CD4-positive, alpha-beta memory T cell (primary cell): ENCODE measurements at regions of chr4 and their contacts with region 1.

Region 1: DNA sequence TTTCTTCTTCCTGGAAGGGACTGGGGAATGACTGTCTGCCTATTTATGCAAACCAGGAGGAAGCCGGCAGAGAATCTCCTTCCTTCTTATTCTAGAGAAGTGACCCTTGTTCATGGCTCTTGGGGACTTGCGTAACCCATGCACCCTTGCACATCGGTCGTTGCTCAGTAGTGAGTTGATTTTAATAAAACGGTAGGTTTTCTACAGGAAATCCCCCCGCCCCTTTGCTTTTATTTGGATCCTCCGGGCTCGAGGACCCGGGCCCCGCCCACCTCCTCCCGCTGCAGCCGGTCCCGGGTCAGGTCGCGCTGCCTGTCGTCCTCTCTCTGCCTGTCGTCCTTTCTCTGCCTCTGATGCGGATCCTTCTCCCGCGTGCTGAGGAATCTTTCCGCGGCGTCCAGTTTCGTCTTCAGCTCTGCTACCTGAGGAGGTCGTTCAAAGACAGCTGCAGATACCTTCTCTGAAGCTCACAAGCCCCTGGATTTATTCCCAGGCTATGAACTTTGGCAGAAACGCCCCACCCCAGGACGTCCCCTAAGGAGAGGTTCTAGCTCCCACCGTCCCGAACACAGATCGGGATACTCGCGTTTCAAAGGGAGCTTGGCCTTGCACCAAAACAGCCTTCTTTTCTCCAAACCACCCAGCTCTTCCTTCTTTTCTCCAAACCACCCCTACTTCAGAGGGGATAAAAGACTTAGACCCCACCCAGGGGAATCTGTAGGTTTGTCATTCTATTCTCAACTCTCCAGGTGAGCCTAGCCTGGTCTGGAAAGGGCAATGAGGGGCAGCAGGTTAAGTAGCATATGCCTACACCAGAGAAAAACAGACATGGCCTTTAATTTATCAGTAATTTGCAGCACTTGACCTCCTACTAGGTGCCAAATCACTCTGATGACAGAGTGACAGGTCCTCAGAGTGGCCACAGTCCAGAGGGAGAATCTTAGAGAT is 7.0 kb downstream of the TNIP3 start:
- DNase-seq: peak in 3 of 5 donors; percentile 16 to 25 (median 19)
- H3K4me3 ChIP-seq: peak overlapping the region; percentile 33 to 51
- H3K4me3 Mint-ChIP-seq: peak overlapping the region; percentile 88 to 97 (median 94)
- H3K27ac ChIP-seq: peak overlapping the region; percentile 1
- H3K27ac Mint-ChIP-seq: peak overlapping the region; percentile 30 to 94 (median 90)
- H3K4me1 ChIP-seq: peaks cover 55% of the 10 kb centered on the region
- H3K4me1 Mint-ChIP-seq: peaks cover 34 to 54% (median 47%) of the 10 kb centered on the region in 4 donors
- H3K27me3 ChIP-seq: no peaks in the 10 kb centered on the region
- H3K27me3 Mint-ChIP-seq: no peaks in the 10 kb centered on the region

Region 2: DNA sequence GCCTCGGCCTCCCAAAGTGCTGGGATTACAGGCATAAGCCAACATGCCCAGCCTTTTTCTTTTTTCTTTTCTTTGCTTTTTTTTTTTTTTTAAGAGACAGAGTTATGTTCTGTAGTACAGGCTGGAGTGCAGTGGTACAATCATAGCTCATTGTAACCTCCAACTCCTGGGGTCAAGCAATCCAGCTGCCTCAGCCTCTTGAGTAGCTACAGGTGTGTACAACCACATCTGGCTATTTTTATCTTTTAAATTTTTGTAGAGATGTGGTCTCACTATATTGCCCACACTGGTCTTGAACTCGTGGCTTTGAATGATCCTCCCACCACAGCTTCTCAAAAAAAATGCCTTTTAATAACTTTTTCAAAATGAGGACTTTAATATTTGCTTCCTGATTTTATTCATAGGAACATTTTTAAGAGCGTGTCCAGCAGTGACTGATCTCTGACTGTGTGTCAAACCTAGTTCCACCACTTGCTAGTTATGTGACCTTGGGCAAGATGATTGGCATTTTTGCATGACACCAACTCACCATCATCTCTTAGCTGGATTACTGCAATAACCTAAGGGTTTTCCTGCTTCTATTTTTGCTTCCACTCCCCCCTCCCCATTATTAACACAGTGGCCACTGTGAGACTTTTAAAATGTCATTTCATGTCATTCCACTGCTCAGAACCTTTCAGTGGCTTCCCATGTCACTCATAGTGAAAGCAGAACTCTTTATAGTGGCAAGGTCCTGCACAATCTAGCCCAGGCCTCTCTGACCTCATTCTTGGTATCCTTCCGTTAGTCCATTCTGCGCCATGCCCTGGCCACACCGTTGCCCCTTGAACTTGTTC is 11.6 kb after region 1 on chr4:
- CTCF ChIA-PET with region 1: interaction called, 6 read pairs
- POLR2A ChIA-PET with region 1: interaction called, 8 read pairs
- intact Hi-C with region 1: loop called (anchors 1 kb)
- DNase-seq: no peak
- H3K4me3 ChIP-seq: no peak overlapping the region
- H3K4me3 Mint-ChIP-seq: no peak overlapping the region
- H3K27ac ChIP-seq: no peak overlapping the region
- H3K27ac Mint-ChIP-seq: peak overlapping the region in 1 of 7 donors; percentile 19
- H3K4me1 ChIP-seq: peaks cover 28% of the 10 kb centered on the region
- H3K4me1 Mint-ChIP-seq: peaks cover 32 to 48% (median 39%) of the 10 kb centered on the region in 4 donors
- H3K27me3 ChIP-seq: no peaks in the 10 kb centered on the region
- H3K27me3 Mint-ChIP-seq: no peaks in the 10 kb centered on the region

Region 3: DNA sequence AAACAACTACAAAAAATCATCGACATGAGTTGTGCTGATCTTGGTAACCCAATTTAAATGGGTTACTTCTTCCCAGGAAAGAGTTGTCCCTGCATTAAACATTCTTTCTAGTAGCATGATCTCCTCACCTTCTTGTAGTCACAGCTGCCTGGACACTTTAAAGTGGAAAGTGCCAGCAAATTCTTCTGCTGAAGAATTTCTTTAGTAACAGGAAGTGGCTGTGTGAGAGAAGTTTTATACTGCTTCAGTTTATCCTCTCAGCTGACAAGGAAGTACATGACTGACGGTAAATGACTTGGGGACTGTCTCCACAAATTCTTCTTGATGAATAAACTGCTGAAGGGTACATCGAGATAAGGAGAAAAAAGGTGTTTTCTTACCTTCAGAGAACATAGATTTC is 25.2 kb after region 1 on chr4:
- CTCF ChIA-PET with region 1: interaction called, 6 read pairs
- POLR2A ChIA-PET with region 1: interaction called, 21 read pairs
- intact Hi-C with region 1: loop called (anchors 2 kb)
- DNase-seq: peak; percentile 42 to 64 (median 57)
- H3K4me3 ChIP-seq: peak overlapping the region; percentile 43 to 62
- H3K4me3 Mint-ChIP-seq: peak overlapping the region; percentile 66 to 96 (median 86)
- H3K27ac ChIP-seq: peak overlapping the region; percentile 87
- H3K27ac Mint-ChIP-seq: peak overlapping the region; percentile 80 to 98 (median 92)
- H3K4me1 ChIP-seq: peaks cover 57% of the 10 kb centered on the region
- H3K4me1 Mint-ChIP-seq: peaks cover 49 to 71% (median 60%) of the 10 kb centered on the region in 4 donors
- H3K27me3 ChIP-seq: no peaks in the 10 kb centered on the region
- H3K27me3 Mint-ChIP-seq: no peaks in the 10 kb centered on the region